Endothelial cell of umbilical vein (primary cell): ENCODE measurements at regions of chr20 and their contacts with region 1.

Region 1: GRCh38 chr20:19784511-19785172 is 26.6 kb downstream of the RIN2 start:
- DNase-seq: peak; percentile 91
- H3K4me3 ChIP-seq: no peak overlapping the region
- H3K27ac ChIP-seq: peak overlapping the region; percentile 73
- H3K4me1 ChIP-seq: peaks cover 34% of the 10 kb centered on the region
- H3K27me3 ChIP-seq: no peaks in the 10 kb centered on the region
- CTCF ChIP-seq: peak; percentile 63 to 70
- POLR2A ChIP-seq: no peak

Region 2: DNA sequence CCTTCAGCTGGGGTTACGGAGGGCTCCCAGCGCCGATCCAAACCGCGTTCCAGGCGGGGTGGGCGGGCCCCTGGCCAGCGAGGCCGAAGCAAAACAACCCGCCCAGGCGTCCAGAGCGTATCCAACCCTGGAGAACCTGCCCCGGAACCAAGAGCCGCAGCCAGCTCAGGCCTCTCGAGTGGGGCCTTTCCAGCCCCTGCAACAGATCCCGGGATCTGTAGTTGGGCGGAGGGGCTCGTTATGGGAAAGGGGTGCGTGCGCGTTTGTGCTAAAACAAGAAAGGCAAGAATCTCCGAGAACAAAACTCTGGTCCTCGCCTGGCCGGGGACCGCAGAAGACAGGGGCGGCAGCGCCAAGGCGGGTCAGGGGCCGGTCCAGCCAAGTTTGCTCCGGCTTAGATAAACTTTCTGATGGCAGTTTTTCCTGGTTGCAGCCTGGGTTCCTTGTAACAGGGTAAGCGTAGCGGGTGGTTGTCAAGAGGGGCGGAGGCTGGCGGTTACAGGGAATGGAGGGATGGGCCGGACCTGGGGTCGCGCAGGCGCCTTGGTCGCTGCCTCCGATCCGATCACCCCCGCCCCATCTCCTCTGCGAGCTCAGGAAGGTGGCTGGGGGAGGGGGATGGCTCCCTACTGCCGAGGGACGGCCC is 27.0 kb before region 1 on chr20:
- CTCF ChIA-PET with region 1: no interaction called
- POLR2A ChIA-PET with region 1: no interaction called
- dilution Hi-C with region 1: no loop called
- intact Hi-C with region 1: loop called (anchors 2 kb)
- DNase-seq: peak; percentile 92
- H3K4me3 ChIP-seq: peak overlapping the region; percentile 75 to 77 (median 76)
- H3K27ac ChIP-seq: peak overlapping the region; percentile 54
- H3K4me1 ChIP-seq: peaks cover 18% of the 10 kb centered on the region
- H3K27me3 ChIP-seq: no peaks in the 10 kb centered on the region
- CTCF ChIP-seq: no peak
- POLR2A ChIP-seq: peak; percentile 61

Region 3: DNA sequence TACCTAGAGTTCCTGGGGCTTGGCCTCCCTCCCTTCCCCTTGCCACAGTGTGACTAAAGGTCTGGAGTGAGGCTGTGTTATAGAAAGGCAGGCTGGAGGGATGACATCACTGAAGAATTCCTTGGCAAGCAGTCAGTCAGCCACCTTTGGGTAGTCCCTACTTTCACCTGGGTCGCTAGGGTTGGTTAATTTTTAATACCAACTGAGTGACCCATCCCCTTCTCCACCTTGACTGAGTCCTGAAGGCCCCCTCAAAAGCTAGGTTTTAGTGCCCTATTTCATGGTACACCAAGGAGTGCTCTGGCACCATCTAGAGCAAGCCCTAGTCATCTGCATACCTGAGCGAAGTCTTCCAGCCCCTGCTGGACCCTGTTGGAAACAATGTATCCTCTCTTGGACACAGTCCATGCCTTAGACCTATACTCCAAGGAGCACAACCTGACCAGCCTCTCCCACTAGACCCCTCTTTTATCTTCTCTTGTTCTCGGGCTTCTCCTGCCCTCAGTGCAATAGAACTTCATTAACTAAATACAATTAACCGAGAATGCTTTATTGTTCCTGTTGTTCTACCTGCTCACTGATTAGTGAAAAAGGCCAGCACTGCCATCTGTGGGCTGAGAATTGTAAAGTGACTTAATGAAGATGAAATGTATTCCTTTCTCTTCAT is 18.0 kb after region 1 on chr20:
- CTCF ChIA-PET with region 1: interaction called, 4 read pairs
- POLR2A ChIA-PET with region 1: no interaction called
- dilution Hi-C with region 1: no loop called
- intact Hi-C with region 1: loop called (anchors 2 kb)
- DNase-seq: peak; percentile 26
- H3K4me3 ChIP-seq: no peak overlapping the region
- H3K27ac ChIP-seq: peak overlapping the region; percentile 22
- H3K4me1 ChIP-seq: peaks cover 30% of the 10 kb centered on the region
- H3K27me3 ChIP-seq: no peaks in the 10 kb centered on the region
- CTCF ChIP-seq: peak in 1 of 2 donors; percentile 7
- POLR2A ChIP-seq: no peak

Region 4: DNA sequence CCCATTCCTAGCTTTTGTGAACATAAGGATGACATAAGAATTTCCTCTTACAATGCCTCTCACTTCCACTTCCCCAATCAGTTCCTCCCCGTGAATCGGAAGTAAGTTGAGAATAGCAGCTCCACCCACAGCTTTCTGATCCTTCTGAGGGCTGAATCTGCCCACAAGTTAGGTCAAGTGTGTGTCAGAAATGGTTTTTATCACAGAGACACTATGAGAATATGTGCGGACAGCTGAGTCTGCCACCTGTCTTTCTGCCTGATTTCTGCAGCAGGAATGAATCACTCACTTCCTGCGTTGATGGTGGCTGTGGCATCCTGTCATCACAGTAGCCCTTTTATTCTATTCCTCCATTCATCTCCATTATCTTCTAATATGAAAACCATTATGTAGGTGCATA is 43.6 kb after region 1 on chr20:
- CTCF ChIA-PET with region 1: interaction called, 37 read pairs
- POLR2A ChIA-PET with region 1: no interaction called
- dilution Hi-C with region 1: no loop called
- intact Hi-C with region 1: loop called (anchors 1 kb)
- DNase-seq: peak; percentile 70
- H3K4me3 ChIP-seq: no peak overlapping the region
- H3K27ac ChIP-seq: peak overlapping the region; percentile 57
- H3K4me1 ChIP-seq: peaks cover 23% of the 10 kb centered on the region
- H3K27me3 ChIP-seq: no peaks in the 10 kb centered on the region
- CTCF ChIP-seq: peak; percentile 14 to 22
- POLR2A ChIP-seq: no peak

Region 5: GRCh38 chr20:19903168-19903811 is 118.6 kb after region 1 on chr20:
- CTCF ChIA-PET with region 1: interaction called, 15 read pairs
- POLR2A ChIA-PET with region 1: no interaction called
- dilution Hi-C with region 1: no loop called
- intact Hi-C with region 1: no loop called
- DNase-seq: peak; percentile 51
- H3K4me3 ChIP-seq: no peak overlapping the region
- H3K27ac ChIP-seq: peak overlapping the region; percentile 3
- H3K4me1 ChIP-seq: peaks cover 18% of the 10 kb centered on the region
- H3K27me3 ChIP-seq: no peaks in the 10 kb centered on the region
- CTCF ChIP-seq: peak; percentile 14 to 23
- POLR2A ChIP-seq: no peak

Region 6: DNA sequence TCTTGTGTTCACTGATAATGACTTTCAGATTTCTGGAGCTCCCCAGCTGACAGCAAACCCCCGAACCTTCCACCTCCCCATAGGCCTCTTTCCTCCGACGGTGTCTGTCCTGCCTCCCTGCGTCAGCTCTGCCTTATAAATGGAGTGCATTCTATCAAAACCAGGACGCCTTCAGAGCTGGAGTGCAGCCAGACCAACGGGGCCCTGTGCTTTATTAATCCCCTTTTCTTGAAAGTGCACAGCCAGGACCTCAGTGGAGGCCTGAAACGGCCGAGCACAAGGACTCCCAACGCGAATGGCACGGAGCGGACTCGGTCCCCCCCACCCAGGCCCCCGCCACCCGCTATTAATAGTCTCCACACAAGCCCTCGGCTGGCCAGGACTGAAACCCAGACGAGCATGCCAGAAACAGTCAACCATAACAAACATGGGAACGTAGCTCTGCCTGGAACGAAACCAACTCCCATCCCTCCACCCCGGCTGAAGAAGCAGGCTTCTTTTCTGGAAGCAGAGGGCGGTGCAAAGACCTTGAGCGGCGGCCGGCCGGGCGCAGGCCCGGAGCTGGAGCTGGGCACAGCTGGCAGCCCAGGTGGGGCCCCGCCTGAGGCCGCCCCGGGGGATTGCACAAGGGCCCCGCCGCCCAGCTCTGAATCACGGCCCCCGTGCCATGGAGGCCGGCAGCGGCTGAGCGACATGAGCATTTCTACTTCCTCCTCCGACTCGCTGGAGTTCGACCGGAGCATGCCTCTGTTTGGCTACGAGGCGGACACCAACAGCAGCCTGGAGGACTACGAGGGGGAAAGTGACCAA is 190.2 kb after region 1 on chr20:
- CTCF ChIA-PET with region 1: interaction called, 11 read pairs
- POLR2A ChIA-PET with region 1: no interaction called
- dilution Hi-C with region 1: no loop called
- intact Hi-C with region 1: no loop called
- DNase-seq: peak; percentile 85
- H3K4me3 ChIP-seq: peak overlapping the region in 1 of 3 experiments; percentile 2
- H3K27ac ChIP-seq: peak overlapping the region; percentile 72
- H3K4me1 ChIP-seq: peaks cover 46% of the 10 kb centered on the region
- H3K27me3 ChIP-seq: no peaks in the 10 kb centered on the region
- CTCF ChIP-seq: no peak
- POLR2A ChIP-seq: no peak

Region 7: GRCh38 chr20:20017001-20017843 is 232.6 kb after region 1 on chr20 and contains the start of gene NAA20:
- CTCF ChIA-PET with region 1: interaction called, 8 read pairs
- POLR2A ChIA-PET with region 1: no interaction called
- dilution Hi-C with region 1: no loop called
- intact Hi-C with region 1: loop called (anchors 1 kb)
- DNase-seq: peak; percentile 92
- H3K4me3 ChIP-seq: peak within 1 kb of the TSS; percentile 55 to 60 (median 57)
- H3K27ac ChIP-seq: peak within 1 kb of the TSS; percentile 60
- H3K4me1 ChIP-seq: peaks cover 13% of the 10 kb centered on the region
- H3K27me3 ChIP-seq: no peaks in the 10 kb centered on the region
- CTCF ChIP-seq: peak; percentile 47 to 87
- POLR2A ChIP-seq: no peak
- total RNA-seq, gene NAA20: 73.4 and 77.3 TPM in 2 replicates

Region 8: DNA sequence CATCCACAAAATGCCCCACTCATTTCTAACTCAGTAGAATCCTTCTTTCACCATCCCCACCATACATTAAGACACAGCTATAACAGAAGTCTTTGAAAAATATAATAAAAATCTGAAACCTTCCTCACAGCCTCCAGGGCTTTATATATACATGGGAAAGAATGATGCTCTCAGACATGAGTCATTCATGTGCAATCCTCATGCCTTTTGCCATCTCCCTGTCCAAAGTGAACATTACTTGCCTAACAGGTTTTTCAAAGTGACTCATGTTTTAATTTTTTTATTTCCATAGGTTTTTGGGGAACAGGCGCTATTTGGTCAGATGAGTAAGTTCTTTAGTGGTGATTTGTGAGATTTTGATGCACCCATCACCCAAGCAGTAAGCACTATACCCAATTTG is 765.1 kb after region 1 on chr20:
- CTCF ChIA-PET with region 1: no interaction called
- POLR2A ChIA-PET with region 1: no interaction called
- dilution Hi-C with region 1: no loop called
- intact Hi-C with region 1: no loop called
- DNase-seq: no peak
- H3K4me3 ChIP-seq: no peak overlapping the region
- H3K27ac ChIP-seq: no peak overlapping the region
- H3K4me1 ChIP-seq: no peaks in the 10 kb centered on the region
- H3K27me3 ChIP-seq: no peaks in the 10 kb centered on the region
- CTCF ChIP-seq: no peak
- POLR2A ChIP-seq: no peak